ENCODE measurements at regions of chr5 and their contacts with region 1.

Region 1: GRCh38 chr5:42005561-42006153 is 80.6 kb downstream of the FBXO4 start:
- DNase-seq: peak in 2 of 4 donors; percentile 4 to 21
- ATAC-seq: peak; percentile 59
- H3K4me3 ChIP-seq: no peak overlapping the region
- H3K27ac ChIP-seq: no peak overlapping the region
- H3K4me1 ChIP-seq: no peaks in the 10 kb centered on the region
- H3K27me3 ChIP-seq: no peaks in the 10 kb centered on the region
- CTCF ChIP-seq: peak; percentile 60 to 66

Region 2: GRCh38 chr5:41547991-41548390 is 457.7 kb before region 1 on chr5:
- intact Hi-C with region 1: no loop called
- DNase-seq: no peak
- ATAC-seq: no peak
- H3K4me3 ChIP-seq: no peak overlapping the region
- H3K27ac ChIP-seq: no peak overlapping the region
- H3K4me1 ChIP-seq: no peaks in the 10 kb centered on the region
- H3K27me3 ChIP-seq: no peaks in the 10 kb centered on the region
- CTCF ChIP-seq: no peak

Region 3: GRCh38 chr5:41924872-41925554 is 80.6 kb before region 1 on chr5 and contains the start of gene FBXO4:
- intact Hi-C with region 1: no loop called
- DNase-seq: peak; percentile 84 to 97 (median 92)
- ATAC-seq: peak; percentile 100
- H3K4me3 ChIP-seq: peak within 1 kb of the TSS; percentile 68 to 70
- H3K27ac ChIP-seq: peak within 1 kb of the TSS; percentile 93 to 96
- H3K4me1 ChIP-seq: peaks cover 0 to 17% of the 10 kb centered on the region in 2 donors
- H3K27me3 ChIP-seq: no peaks in the 10 kb centered on the region
- CTCF ChIP-seq: peak; percentile 37 to 39
- polyA plus RNA-seq, gene FBXO4: 16.0 to 23.9 (median 21.9) TPM

Region 4: DNA sequence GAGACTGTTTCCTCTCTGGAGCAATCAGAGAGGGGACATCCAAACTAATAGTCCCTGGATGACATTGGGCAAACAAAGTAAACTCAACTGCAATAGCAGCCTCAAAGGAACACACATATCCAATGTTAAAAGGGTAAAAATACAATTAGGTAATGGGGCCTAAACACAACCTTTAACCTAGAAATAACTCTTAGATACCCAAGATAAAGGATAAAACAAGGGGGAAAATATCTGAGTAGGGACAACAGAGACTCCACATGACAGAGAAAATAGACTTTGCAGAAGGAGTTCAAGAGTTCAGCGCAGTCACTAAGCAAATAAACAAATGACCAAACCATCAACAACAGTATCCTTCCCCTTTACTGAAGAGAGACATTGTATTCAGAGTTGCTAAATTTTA is 68.7 kb after region 1 on chr5:
- intact Hi-C with region 1: no loop called
- DNase-seq: no peak
- ATAC-seq: no peak
- H3K4me3 ChIP-seq: no peak overlapping the region
- H3K27ac ChIP-seq: no peak overlapping the region
- H3K4me1 ChIP-seq: no peaks in the 10 kb centered on the region
- H3K27me3 ChIP-seq: no peaks in the 10 kb centered on the region
- CTCF ChIP-seq: no peak

Region 5: DNA sequence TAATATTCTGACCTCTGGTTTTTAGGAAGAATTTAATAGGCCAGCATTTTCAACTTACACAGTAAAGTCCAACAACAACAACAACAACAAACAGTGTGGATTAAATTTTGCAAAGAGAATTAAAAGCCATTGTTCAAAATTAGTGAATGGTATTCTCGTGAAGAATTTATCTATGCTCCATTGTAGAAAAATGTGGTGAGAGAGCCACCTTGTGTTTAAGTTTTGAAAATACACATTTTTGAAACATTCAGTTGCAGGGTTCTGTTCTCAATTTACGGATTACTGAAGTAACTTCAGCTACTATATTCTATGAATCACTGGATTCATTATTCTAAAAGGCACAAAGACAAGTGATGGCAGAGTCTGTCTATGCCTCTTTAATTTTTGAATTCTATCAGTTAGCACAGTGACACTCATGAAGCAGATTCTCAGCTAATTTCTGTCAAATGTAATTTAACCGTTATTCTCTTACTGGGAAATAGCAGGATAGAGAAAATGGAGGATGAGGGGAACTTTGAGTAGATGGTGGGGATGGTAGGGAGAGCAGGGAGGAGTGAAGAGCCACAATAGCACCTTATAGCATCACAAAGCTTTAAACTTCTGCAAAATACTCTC is 761.9 kb after region 1 on chr5:
- intact Hi-C with region 1: loop called in 1 of 2 experiments (anchors 10 kb)
- DNase-seq: peak in 2 of 4 donors; percentile 23 to 33
- ATAC-seq: peak; percentile 68
- H3K4me3 ChIP-seq: no peak overlapping the region
- H3K27ac ChIP-seq: no peak overlapping the region
- H3K4me1 ChIP-seq: no peaks in the 10 kb centered on the region
- H3K27me3 ChIP-seq: no peaks in the 10 kb centered on the region
- CTCF ChIP-seq: peak in 1 of 2 donors; percentile 43

Measured in left lung (tissue), 14 donors.